Right lobe of liver (tissue), 6 donors: ENCODE measurements at regions of chr1 and their contacts with region 1.

Region 1: DNA sequence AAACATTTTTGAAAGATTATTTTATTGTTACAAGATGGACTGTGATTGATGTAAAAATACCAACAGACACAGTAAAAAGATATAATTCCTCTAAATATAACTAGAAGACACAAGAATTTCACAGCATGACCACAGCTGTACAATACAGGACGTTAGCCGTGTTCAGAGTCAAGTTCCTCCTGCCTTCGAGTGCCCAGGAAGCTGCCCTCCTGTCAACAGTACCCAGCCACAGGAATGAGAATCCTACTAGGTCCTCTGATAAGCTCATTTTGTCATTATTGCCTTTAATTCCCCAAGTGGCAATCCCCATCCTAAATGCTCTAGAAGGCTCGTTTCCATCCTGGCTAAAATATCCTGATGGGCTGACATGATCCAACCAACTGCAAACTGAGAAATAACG is 16.4 kb upstream of the CAPN2 start:
- DNase-seq: no peak
- ATAC-seq: no peak
- H3K4me3 ChIP-seq: no peak overlapping the region
- H3K27ac ChIP-seq: no peak overlapping the region
- H3K4me1 ChIP-seq: peaks cover 0 to 4% (median 0%) of the 10 kb centered on the region in 4 donors
- H3K27me3 ChIP-seq: no peaks in the 10 kb centered on the region
- CTCF ChIP-seq: no peak
- POLR2A ChIP-seq: no peak

Region 2: GRCh38 chr1:223500560-223501425 is 195.1 kb before region 1 on chr1:
- intact Hi-C with region 1: no loop called
- DNase-seq: no peak
- ATAC-seq: no peak
- H3K4me3 ChIP-seq: no peak overlapping the region
- H3K27ac ChIP-seq: no peak overlapping the region
- H3K4me1 ChIP-seq: no peaks in the 10 kb centered on the region
- H3K27me3 ChIP-seq: no peaks in the 10 kb centered on the region
- CTCF ChIP-seq: no peak
- POLR2A ChIP-seq: no peak

Region 3: GRCh38 chr1:224052772-224053171 is 356.8 kb after region 1 on chr1:
- intact Hi-C with region 1: loop called in 1 of 2 experiments (anchors 10 kb)
- DNase-seq: no peak
- ATAC-seq: no peak
- H3K4me3 ChIP-seq: no peak overlapping the region
- H3K27ac ChIP-seq: no peak overlapping the region
- H3K4me1 ChIP-seq: no peaks in the 10 kb centered on the region
- H3K27me3 ChIP-seq: no peaks in the 10 kb centered on the region
- CTCF ChIP-seq: no peak
- POLR2A ChIP-seq: no peak